Activated CD4-positive, alpha-beta T cell treated with anti-CD3 and anti-CD28 coated beads for 36 hours (primary cell): ENCODE measurements at regions of chr11 and their contacts with region 1.

Region 1: DNA sequence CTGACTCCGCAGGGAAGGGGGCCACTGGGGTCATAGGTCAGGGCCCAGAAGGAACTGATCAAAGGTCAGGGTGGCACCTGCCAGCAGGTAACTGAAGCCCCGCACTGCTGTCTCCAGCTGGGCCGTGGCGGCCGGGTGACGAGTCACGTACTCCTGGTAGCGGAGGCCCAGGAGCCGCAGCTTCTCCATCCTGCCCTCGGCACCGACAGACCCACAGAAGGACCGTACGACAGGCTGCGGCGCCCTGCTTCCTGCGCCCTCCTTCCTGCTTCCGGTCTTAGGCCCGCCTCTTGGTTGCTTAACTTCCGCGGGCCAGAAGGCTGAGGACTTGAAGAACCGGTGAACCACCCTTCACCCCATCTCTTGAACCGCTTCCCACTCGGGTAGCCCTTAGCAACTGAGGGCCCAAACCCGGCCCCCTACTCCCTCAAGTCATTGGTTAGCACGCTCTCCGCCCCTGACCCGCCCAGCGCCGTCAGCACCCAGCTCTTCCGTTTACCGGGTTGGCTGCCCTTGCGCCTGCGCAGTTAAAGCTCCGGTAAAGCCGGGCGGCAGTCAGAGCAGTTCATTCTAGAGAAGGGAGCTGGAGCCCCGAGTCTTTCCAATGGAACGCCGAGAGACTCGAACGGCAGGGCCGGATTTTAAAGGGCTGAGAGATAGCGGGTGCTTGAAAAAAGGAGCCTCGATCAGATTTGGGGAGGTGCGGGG is at the start of gene PEX16:
- DNase-seq: peak; percentile 97
- ATAC-seq: peak; percentile 94
- H3K4me3 Mint-ChIP-seq: peak within 1 kb of the TSS; percentile 96
- H3K27ac Mint-ChIP-seq: peak within 1 kb of the TSS; percentile 95
- H3K4me1 Mint-ChIP-seq: peaks cover 31% of the 10 kb centered on the region
- H3K27me3 Mint-ChIP-seq: peaks cover 3% of the 10 kb centered on the region
- total RNA-seq, gene PEX16: 28.1 to 33.4 TPM

Region 2: GRCh38 chr11:45147017-45147728 is 770.6 kb before region 1 on chr11:
- CTCF ChIA-PET with region 1: no interaction called
- POLR2A ChIA-PET with region 1: no interaction called
- intact Hi-C with region 1: loop called in 1 of 2 experiments (anchors 5 kb)
- DNase-seq: peak; percentile 95
- ATAC-seq: peak; percentile 99
- H3K4me3 Mint-ChIP-seq: peak overlapping the region; percentile 81
- H3K27ac Mint-ChIP-seq: peak overlapping the region; percentile 74
- H3K4me1 Mint-ChIP-seq: peaks cover 19% of the 10 kb centered on the region
- H3K27me3 Mint-ChIP-seq: peaks cover 15% of the 10 kb centered on the region

Region 3: GRCh38 chr11:45804761-45805304 is 112.9 kb before region 1 on chr11 and contains the start of gene SLC35C1:
- CTCF ChIA-PET with region 1: no interaction called
- POLR2A ChIA-PET with region 1: interaction called, 3 read pairs
- intact Hi-C with region 1: loop called (anchors 1 kb)
- DNase-seq: peak; percentile 98
- ATAC-seq: peak; percentile 97
- H3K4me3 Mint-ChIP-seq: peak within 1 kb of the TSS; percentile 91
- H3K27ac Mint-ChIP-seq: peak within 1 kb of the TSS; percentile 86
- H3K4me1 Mint-ChIP-seq: peaks cover 42% of the 10 kb centered on the region
- H3K27me3 Mint-ChIP-seq: no peaks in the 10 kb centered on the region
- total RNA-seq, gene SLC35C1: 9.6 to 9.8 TPM

Region 4: DNA sequence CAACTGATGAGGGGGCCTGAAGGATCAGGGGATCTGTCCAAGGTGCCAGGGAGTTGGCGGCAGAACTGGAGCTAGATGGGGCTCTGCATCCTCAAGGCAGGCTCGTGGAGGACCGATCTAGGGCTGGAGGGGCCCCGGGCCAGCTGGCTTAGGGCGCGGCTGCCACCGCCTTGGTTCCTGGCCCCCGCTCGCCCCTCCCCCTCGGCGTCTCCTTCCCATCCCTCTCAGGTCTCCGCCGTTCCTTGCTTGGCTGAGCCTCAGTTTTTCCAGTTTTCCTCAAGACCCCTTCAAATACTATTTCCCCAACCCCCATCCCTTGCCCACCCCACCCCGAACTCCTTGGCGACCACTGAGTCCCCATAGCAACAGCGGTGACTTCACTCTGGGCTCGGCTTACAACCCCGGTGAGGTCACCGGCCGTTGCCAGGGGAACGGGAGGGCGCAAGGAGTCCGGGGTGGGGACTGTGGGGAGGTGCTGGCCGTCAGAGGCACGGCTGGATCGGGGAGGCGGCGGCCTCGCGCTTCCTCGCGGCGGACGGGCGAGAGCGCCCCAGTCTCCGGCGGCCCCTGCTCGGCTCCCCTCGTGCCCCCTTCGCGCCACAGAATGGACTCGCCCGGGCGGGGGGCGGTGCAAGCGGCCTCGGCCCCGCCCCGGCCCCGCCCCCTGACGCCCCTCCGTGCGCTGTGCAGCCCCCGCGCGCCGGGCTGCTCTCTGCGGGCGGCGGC is 18.2 kb before region 1 on chr11:
- CTCF ChIA-PET with region 1: no interaction called
- POLR2A ChIA-PET with region 1: no interaction called
- intact Hi-C with region 1: loop called in 1 of 2 experiments (anchors 1 kb)
- DNase-seq: peak; percentile 80
- ATAC-seq: peak; percentile 86
- H3K4me3 Mint-ChIP-seq: peak overlapping the region; percentile 40
- H3K27ac Mint-ChIP-seq: no peak overlapping the region
- H3K4me1 Mint-ChIP-seq: peaks cover 2% of the 10 kb centered on the region
- H3K27me3 Mint-ChIP-seq: peaks cover 26% of the 10 kb centered on the region

Region 5: GRCh38 chr11:45993531-45994001 is 75.8 kb after region 1 on chr11:
- CTCF ChIA-PET with region 1: no interaction called
- POLR2A ChIA-PET with region 1: no interaction called
- intact Hi-C with region 1: no loop called
- DNase-seq: no peak
- ATAC-seq: no peak
- H3K4me3 Mint-ChIP-seq: no peak overlapping the region
- H3K27ac Mint-ChIP-seq: no peak overlapping the region
- H3K4me1 Mint-ChIP-seq: peaks cover 4% of the 10 kb centered on the region
- H3K27me3 Mint-ChIP-seq: no peaks in the 10 kb centered on the region

Region 6: DNA sequence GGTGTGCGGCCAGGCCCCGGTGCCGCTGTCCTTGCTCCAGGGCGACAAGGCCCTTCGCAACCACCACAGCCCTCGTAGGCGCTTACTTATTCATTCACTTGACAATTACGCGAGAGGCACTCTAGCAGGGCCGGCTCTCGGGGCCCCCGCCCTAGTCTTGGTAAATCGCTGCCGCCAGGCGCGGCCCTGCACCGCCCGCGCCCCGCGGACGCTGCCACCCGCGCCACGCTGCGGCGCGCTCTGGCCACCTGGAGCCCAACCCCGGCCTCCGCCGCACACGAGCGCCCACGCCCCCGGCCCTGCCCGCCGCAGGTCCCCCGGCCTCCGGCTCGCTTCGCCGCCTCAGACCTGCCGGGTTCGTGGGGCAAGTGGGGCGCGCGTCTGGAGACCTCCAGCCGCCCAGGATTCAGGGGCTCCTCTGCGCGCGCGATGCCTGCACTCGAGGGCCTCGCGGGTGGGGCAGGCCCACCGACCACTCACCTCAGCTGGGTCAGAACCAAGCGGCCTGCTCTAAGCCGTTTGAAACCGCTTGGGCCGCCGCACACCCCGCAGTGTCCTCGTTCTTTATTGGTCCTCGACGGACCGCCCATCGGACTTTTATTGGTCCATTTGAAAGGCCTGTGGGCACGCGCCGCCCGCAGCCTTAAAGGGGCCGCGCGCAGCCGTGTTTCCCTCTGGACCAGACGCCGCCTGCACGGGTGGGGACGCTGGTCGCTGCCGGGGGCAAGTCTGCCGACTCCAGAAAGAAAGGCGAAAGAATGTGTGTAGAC is 928.1 kb after region 1 on chr11 and contains the start of gene CKAP5:
- CTCF ChIA-PET with region 1: no interaction called
- POLR2A ChIA-PET with region 1: no interaction called
- intact Hi-C with region 1: loop called in 1 of 2 experiments (anchors 5 kb)
- DNase-seq: peak; percentile 92
- ATAC-seq: peak; percentile 92
- H3K4me3 Mint-ChIP-seq: peak within 1 kb of the TSS; percentile 86
- H3K27ac Mint-ChIP-seq: peak within 1 kb of the TSS; percentile 94
- H3K4me1 Mint-ChIP-seq: peaks cover 30% of the 10 kb centered on the region
- H3K27me3 Mint-ChIP-seq: no peaks in the 10 kb centered on the region
- total RNA-seq, gene CKAP5: 166 to 183 TPM